Activated T-helper 1 cell treated with anti-CD3 and anti-CD28 coated beads, Interleukin-12 subunit alpha, Interleukin-12 subunit beta, Interleukin-2, Interleukin-4 antibody, amounts not matched to agents 30 ng/mL and 10 ng/mL and 1 ng/mL, durations not matched to agents 14 hours and 24 hours and 36 hours (primary cell): ENCODE measurements at regions of chr1 and their contacts with region 1.

Region 1: DNA sequence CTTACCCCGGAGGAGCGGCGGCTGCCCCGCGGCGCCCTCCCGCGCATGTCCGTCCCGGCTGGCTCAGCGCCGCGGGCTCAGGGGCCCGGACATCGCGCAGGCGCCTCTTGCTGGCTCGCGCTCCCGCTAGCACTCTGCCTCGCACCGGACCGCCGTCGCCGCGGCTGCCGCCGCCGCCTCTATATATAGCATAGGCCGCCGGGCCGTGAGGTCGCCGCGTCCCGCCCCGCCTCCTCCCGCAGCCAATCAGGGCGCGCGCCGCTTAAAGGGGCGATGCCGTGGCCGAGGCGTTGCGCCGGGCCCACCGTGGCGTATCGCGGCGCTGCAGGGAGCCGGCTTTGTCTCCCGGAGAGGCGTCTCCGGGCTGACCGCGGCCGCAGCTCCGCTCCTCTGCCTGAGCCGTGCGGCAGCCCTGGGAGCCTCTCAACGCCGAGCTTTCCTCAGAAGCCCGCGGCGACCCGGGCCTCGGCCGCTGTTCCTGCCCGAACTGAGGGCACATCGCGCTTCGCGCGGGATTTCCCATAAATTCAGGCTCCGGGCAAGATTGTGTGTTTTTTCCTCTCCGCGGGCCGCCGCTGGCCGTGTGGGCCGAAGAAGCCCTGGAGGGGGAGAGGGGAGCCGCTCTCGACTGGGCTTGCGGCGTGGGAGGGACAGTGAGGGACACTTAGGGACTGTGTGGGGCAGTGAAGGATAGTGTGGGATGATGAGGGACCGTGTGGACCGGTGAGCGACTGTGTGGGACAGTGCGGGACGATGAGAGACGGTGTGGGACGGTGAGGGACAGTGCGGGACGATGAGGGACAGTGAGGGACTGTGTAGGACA is at the start of gene ERRFI1:
- DNase-seq: peak; percentile 83
- H3K4me3 Mint-ChIP-seq: peak within 1 kb of the TSS; percentile 84
- H3K27ac Mint-ChIP-seq: peak within 1 kb of the TSS; percentile 32
- H3K4me1 Mint-ChIP-seq: peaks cover 12% of the 10 kb centered on the region
- H3K27me3 Mint-ChIP-seq: peaks cover 52% of the 10 kb centered on the region
- total RNA-seq, gene ERRFI1: 1.6 and 3.2 TPM in 2 replicates

Region 2: DNA sequence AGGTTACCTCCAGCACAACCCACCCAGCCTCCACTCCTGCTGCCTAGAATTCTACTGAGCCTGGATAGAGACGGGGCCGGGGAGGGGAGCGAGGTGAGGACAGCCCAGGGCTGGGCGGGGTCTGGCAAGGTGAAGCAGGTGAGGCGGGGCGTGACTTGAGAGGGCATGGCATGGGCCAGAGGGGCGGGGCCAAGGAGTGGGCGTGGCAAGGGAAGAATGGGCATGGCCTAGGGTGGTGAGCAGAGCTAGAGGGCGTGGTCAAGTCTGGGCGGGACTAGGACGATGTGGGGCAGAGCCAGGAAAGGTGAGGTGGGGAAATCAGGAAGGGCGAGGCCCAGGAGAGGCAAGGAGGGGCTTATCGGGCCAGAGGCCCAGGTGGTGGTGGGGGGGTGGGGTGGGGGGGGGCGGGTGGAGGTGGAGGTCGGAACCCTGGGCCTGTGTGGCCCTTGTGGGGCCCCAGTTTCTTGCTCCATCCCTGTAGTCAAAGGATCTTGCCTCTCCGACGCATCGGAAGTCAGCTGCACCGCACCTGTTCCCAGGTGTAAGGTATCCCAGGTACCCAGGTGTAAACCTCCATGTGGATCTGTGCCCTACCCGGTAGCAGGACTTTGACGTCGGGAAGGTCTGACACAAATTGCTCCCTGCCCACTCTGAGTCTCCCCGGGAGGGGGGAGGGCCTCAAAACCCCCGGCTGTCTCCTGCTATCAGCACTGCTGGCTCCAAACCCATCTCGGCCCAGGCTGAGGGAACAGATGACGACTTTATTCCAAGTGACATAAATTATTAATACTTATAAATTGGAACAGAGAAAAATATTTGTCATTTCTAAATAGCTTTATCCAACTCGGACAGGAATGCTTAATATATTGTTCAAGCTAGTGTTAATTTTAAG is 140.6 kb before region 1 on chr1:
- intact Hi-C with region 1: no loop called
- DNase-seq: no peak
- H3K4me3 Mint-ChIP-seq: no peak overlapping the region
- H3K27ac Mint-ChIP-seq: no peak overlapping the region
- H3K4me1 Mint-ChIP-seq: no peaks in the 10 kb centered on the region
- H3K27me3 Mint-ChIP-seq: peaks cover 25% of the 10 kb centered on the region

Region 3: GRCh38 chr1:8116893-8117264 is 90.5 kb after region 1 on chr1:
- intact Hi-C with region 1: no loop called
- DNase-seq: no peak
- H3K4me3 Mint-ChIP-seq: no peak overlapping the region
- H3K27ac Mint-ChIP-seq: no peak overlapping the region
- H3K4me1 Mint-ChIP-seq: peaks cover 16% of the 10 kb centered on the region
- H3K27me3 Mint-ChIP-seq: peaks cover 2% of the 10 kb centered on the region

Region 4: DNA sequence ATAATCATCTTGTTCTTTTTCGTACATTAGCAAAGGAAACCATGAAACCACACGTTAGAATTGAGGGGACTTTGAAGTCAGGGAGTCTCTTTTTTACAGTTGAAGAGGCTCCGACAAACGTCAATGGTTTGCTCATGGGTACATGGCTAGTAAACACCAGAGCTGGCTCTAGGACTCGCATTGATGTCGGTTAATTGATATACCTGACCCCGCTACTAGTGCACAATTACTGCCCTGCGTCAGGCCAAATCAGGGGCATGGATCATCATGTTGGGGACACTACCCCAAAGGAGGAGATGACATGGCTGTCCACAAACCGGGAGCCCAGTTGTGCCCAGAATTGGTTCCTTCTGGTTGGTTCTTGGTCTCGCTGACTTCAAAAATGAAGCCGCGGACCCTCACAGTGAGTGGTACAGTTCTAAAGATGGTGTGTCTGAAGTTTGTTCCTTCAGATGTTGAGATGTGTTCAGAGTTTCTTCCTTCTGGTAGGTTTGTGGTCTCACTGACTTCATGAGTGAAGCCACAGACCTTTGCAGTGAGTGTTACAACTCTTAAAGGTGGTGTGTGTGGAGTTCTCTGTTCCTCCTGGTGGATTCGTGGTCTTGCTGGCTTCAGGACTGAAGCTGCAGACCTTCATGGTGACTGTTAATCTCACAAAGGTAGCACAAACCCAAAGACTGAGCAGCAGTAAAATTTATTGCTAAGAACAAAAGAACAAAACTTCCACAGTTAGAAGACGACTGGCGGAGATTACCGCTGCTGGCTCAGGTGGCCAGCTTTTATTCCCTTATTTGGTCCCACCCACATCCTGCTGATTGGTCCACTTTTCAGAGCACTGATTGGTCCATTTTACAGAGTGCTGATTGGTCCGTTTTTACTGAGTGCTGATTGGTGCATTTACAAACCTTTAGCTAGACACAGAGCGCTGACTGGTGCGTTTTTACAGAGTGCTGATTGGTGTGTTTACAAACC is 126.7 kb after region 1 on chr1:
- intact Hi-C with region 1: loop called (anchors 1 kb)
- DNase-seq: peak; percentile 41
- H3K4me3 Mint-ChIP-seq: peak overlapping the region; percentile 74
- H3K27ac Mint-ChIP-seq: peak overlapping the region; percentile 93
- H3K4me1 Mint-ChIP-seq: peaks cover 41% of the 10 kb centered on the region
- H3K27me3 Mint-ChIP-seq: peaks cover 26% of the 10 kb centered on the region

Region 5: GRCh38 chr1:8169364-8170058 is 143.1 kb after region 1 on chr1:
- intact Hi-C with region 1: loop called (anchors 5 kb)
- DNase-seq: peak; percentile 38
- H3K4me3 Mint-ChIP-seq: peak overlapping the region; percentile 25
- H3K27ac Mint-ChIP-seq: peak overlapping the region; percentile 90
- H3K4me1 Mint-ChIP-seq: peaks cover 25% of the 10 kb centered on the region
- H3K27me3 Mint-ChIP-seq: peaks cover 3% of the 10 kb centered on the region

Region 6: DNA sequence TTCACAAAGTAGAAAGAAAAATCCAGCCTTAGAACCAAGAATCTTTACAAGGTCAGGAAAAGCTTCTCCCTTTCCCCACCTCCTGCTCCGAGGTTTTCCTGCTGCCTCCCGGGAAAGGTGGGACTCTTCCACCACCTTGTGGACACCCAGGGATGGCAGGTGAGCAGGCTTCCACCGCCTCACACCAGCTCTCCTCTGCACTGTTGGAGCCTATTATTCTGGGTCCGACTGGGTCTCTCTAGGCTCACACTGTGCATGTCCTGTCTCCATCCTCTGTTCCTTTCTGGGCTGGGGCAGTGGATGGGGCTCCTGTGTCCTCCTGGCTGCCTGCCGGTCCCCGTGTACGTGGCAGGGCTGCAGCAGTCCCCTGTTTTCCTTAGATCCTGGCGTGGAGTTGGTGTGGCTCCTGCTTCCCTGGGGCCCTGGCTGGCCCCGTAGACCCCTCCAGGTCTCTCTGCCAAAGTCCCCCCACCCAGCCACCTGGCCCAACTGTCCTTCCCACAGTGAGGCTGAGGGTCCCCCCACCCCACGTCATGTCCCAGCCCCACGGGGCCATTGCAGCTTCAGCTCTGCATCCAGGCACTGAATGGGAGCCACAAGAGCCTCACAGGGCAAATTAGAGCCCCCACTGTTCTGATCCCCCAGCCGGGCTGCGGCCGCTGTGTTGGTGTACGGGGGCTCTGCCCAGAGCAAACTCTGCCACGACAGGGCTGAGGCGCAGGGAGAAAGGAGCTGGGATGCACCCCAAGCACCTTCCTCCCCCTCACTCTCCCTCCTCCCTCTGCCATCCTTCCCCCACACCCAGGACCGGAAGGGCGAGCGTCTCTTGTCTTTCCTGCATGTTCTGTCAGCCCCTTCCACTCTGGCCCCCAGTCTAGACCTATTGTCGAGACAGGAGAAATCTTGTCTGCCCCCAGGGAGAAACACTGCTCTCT is 288.2 kb after region 1 on chr1:
- intact Hi-C with region 1: loop called (anchors 1 kb)
- DNase-seq: no peak
- H3K4me3 Mint-ChIP-seq: no peak overlapping the region
- H3K27ac Mint-ChIP-seq: no peak overlapping the region
- H3K4me1 Mint-ChIP-seq: peaks cover 18% of the 10 kb centered on the region
- H3K27me3 Mint-ChIP-seq: peaks cover 44% of the 10 kb centered on the region